ENCODE measurements at regions of chr17 and their contacts with region 1.

Region 1: GRCh38 chr17:16415031-16415924 is at the start of gene TRPV2:
- DNase-seq: peak; percentile 30 to 71 (median 50)
- H3K4me3 ChIP-seq: peak within 1 kb of the TSS; percentile 96
- H3K4me3 Mint-ChIP-seq: peak within 1 kb of the TSS; percentile 90 to 100 (median 99)
- H3K27ac ChIP-seq: peak within 1 kb of the TSS; percentile 95
- H3K27ac Mint-ChIP-seq: peak within 1 kb of the TSS; percentile 95 to 100 (median 99)
- H3K4me1 ChIP-seq: peaks cover 50% of the 10 kb centered on the region
- H3K4me1 Mint-ChIP-seq: peaks cover 44 to 54% (median 52%) of the 10 kb centered on the region in 3 donors
- H3K27me3 ChIP-seq: no peaks in the 10 kb centered on the region
- H3K27me3 Mint-ChIP-seq: peaks cover 0 to 1% of the 10 kb centered on the region in 2 donors
- total RNA-seq, gene TRPV2: 60.0 to 67.3 TPM

Region 2: GRCh38 chr17:16342979-16343378 is 72.3 kb before region 1 on chr17:
- CTCF ChIA-PET with region 1: no interaction called
- POLR2A ChIA-PET with region 1: no interaction called
- DNase-seq: no peak
- H3K4me3 ChIP-seq: no peak overlapping the region
- H3K4me3 Mint-ChIP-seq: no peak overlapping the region
- H3K27ac ChIP-seq: no peak overlapping the region
- H3K27ac Mint-ChIP-seq: peak overlapping the region in 2 of 8 donors; percentile 62 to 81
- H3K4me1 ChIP-seq: no peaks in the 10 kb centered on the region
- H3K4me1 Mint-ChIP-seq: no peaks in the 10 kb centered on the region
- H3K27me3 ChIP-seq: no peaks in the 10 kb centered on the region
- H3K27me3 Mint-ChIP-seq: no peaks in the 10 kb centered on the region

Region 3: DNA sequence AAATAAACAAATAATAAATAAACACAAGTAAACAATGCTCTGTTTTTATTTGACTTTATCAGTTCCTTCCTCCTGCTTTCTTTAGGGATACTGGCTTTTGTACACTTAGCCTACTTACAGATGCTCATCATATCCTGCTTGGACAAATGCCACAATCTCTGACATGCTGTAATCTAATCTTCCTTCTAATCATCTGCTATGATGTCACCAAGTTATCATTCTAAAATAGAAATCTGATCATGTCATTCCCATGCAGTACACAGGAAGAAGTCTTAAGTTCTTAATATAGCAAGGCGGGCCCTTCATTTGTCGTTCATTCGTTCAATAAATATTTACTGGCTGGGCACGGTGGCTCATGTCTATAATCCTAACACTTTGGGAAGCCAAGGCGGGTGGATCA is 43.5 kb before region 1 on chr17:
- CTCF ChIA-PET with region 1: interaction called, 10 read pairs
- POLR2A ChIA-PET with region 1: no interaction called
- DNase-seq: no peak
- H3K4me3 ChIP-seq: no peak overlapping the region
- H3K4me3 Mint-ChIP-seq: no peak overlapping the region
- H3K27ac ChIP-seq: no peak overlapping the region
- H3K27ac Mint-ChIP-seq: no peak overlapping the region
- H3K4me1 ChIP-seq: no peaks in the 10 kb centered on the region
- H3K4me1 Mint-ChIP-seq: no peaks in the 10 kb centered on the region
- H3K27me3 ChIP-seq: no peaks in the 10 kb centered on the region
- H3K27me3 Mint-ChIP-seq: peaks cover 0 to 2% of the 10 kb centered on the region in 2 donors

Region 4: DNA sequence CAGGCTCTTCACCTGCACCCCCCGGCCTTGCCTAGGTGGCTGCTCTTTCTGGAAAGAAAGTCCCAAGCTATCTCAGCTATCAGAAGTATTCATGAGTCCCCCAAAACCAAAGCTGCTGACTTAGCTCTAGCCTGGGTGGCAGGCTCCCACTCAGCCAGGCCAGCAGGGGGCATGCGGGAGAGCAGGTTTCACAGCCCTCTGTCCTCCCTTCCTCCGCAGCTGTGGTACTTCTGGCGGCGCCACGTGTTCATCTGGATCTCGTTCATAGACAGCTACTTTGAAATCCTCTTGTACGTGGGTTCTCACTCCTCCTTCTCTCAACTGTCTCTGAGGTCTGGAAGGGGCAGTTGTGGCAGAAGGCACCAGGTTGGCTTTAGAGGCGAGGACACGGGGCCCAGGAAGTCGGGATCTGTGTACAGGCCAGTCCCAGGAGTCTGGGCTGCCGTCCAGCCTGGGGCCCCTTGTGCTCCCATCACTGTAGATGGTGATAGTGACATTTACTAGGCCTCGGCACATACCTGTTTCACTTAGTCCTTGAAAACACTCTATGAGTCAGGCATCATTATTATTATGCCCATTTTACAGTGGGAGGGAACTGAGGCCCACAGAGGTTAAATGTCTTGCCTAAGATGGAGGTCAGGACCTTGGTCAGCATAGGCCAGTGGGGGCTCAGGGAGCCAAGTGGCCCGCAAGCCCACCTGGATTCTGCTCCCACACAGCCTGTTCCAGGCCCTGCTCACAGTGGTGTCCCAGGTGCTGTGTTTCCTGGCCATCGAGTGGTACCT is 13.0 kb after region 1 on chr17:
- CTCF ChIA-PET with region 1: interaction called, 23 read pairs
- POLR2A ChIA-PET with region 1: interaction called, 3 read pairs
- DNase-seq: peak in 1 of 5 donors; percentile 13
- H3K4me3 ChIP-seq: no peak overlapping the region
- H3K4me3 Mint-ChIP-seq: no peak overlapping the region
- H3K27ac ChIP-seq: no peak overlapping the region
- H3K27ac Mint-ChIP-seq: peak overlapping the region in 1 of 8 donors; percentile 11
- H3K4me1 ChIP-seq: no peaks in the 10 kb centered on the region
- H3K4me1 Mint-ChIP-seq: peaks cover 3 to 7% (median 4%) of the 10 kb centered on the region in 3 donors
- H3K27me3 ChIP-seq: no peaks in the 10 kb centered on the region
- H3K27me3 Mint-ChIP-seq: no peaks in the 10 kb centered on the region

Region 5: DNA sequence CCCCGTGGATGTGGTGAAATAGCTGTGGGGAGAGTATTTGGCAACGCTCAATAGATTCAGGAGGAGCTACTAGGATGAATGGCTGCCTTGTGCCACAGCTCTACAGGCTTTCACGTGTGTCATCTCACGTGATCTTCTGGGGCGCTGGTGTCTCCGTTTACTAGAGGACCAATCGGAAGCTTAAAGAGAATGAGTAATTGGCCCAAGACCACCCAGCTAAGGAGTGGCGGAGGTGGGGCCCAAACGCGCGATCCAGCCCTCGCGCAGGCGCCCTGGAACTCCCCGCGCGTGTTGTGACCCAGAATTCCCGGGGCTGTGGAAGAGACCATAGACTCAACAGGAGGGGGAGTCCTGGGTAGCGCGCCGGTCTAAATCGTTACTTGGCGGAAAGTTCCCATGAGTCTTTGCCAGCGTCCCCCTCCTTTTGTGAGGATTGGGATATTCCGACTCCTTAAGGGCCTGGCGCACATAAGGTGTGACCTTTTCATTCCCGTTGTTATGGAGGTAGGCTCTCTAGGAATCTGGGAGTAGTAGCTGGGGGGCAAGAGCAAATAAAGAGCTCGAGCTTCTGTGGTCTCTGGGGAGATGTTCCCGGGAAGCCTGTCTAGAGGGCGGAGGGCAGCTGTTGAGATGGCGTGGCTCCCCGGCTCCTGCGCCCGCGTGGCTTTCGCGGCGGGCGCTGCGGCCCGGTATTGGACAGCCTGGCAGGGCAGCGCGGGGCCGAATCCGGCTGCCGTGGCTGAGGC is 23.5 kb after region 1 on chr17:
- CTCF ChIA-PET with region 1: interaction called, 18 read pairs
- POLR2A ChIA-PET with region 1: interaction called, 24 read pairs
- DNase-seq: peak; percentile 91 to 97 (median 97)
- H3K4me3 ChIP-seq: peak overlapping the region; percentile 74
- H3K4me3 Mint-ChIP-seq: peak overlapping the region; percentile 96 to 100 (median 99)
- H3K27ac ChIP-seq: peak overlapping the region; percentile 92
- H3K27ac Mint-ChIP-seq: peak overlapping the region; percentile 78 to 100 (median 99)
- H3K4me1 ChIP-seq: peaks cover 35% of the 10 kb centered on the region
- H3K4me1 Mint-ChIP-seq: peaks cover 55 to 61% (median 59%) of the 10 kb centered on the region in 3 donors
- H3K27me3 ChIP-seq: no peaks in the 10 kb centered on the region
- H3K27me3 Mint-ChIP-seq: no peaks in the 10 kb centered on the region